H1 (cell line): ENCODE measurements at regions of chr9 and their contacts with region 1.

Region 1: DNA sequence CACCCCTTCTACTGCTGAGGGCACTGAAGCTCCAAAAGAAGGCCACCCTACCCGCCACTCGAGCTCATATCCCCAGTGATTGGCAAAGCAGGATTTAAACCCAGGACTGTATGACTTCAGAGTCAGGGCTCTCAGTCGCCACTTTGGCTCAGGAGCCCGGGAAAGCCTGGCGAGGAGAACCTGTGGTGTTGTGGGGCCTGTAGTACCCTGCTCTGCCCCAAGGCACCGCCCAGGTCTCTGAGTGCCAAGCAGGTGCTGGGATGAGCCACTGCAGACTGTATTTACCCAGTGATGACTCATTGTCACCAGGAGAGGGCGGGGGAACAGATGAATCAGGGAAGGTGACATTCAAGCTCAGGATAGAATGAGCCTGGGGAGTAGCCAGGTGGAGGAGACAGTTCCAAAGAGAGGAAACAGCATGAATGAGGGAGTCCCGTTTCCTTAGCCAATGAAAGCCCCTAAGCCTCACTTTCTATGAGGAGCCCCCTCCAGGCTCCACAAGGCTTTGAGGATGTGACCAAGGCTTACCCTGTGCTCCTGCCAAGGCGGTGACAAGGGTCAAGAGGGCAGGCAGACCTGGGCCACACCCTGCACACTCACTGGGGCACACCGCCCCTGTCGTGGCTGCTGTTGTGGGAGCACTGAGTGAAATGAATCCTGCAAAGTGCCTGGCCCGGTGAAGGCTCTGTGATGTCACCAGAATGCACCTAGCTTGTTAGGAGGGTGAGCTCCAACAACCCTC is 17.8 kb upstream of the DPM2 start:
- DNase-seq: peak in 1 of 2 experiments; percentile 75
- H3K4me3 ChIP-seq: no peak overlapping the region
- H3K27ac ChIP-seq: 0 out of 2 replicates have a peak overlapping the region, but pooled peaks have one; percentile 12
- H3K4me1 ChIP-seq: peaks cover 0 to 11% (median 8%) of the 10 kb centered on the region in 4 experiments; a peak in 5 of 7 replicates
- H3K27me3 ChIP-seq: no peaks in the 10 kb centered on the region
- CTCF ChIP-seq: peak in 2 of 3 experiments; percentile 86 to 92; a peak in 3 of 4 replicates
- EP300 ChIP-seq: no peak
- POLR2A ChIP-seq: no peak
- RAD21 ChIP-seq: peak; percentile 62 to 75

Region 2: GRCh38 chr9:127839109-127839508 is 116.4 kb before region 1 on chr9:
- CTCF ChIA-PET with region 1: no interaction called
- POLR2A ChIA-PET with region 1: no interaction called
- DNase-seq: no peak
- H3K4me3 ChIP-seq: no peak overlapping the region
- H3K27ac ChIP-seq: no peak overlapping the region
- H3K4me1 ChIP-seq: peaks cover 0 to 4% (median 0%) of the 10 kb centered on the region in 4 experiments; a peak in 2 of 7 replicates
- H3K27me3 ChIP-seq: no peaks in the 10 kb centered on the region; a peak in 1 of 7 replicates
- CTCF ChIP-seq: no peak
- EP300 ChIP-seq: no peak
- POLR2A ChIP-seq: no peak
- RAD21 ChIP-seq: no peak

Region 3: GRCh38 chr9:127937388-127938280 is 17.8 kb before region 1 on chr9 and contains the start of gene DPM2:
- CTCF ChIA-PET with region 1: interaction called, 143 read pairs
- POLR2A ChIA-PET with region 1: interaction called, 4 read pairs
- DNase-seq: peak in 1 of 2 experiments; percentile 83
- H3K4me3 ChIP-seq: peak within 1 kb of the TSS; percentile 76 to 98 (median 88)
- H3K27ac ChIP-seq: peak within 1 kb of the TSS; percentile 46; the same call in 1 of the 2 replicates
- H3K4me1 ChIP-seq: peaks cover 0 to 19% (median 14%) of the 10 kb centered on the region in 4 experiments; a peak in 6 of 7 replicates
- H3K27me3 ChIP-seq: no peaks in the 10 kb centered on the region
- CTCF ChIP-seq: no peak
- EP300 ChIP-seq: no peak
- POLR2A ChIP-seq: peak in 1 of 2 experiments; percentile 84; a peak in 2 of 3 replicates
- RAD21 ChIP-seq: no peak
- total RNA-seq, gene DPM2: 45.4 and 48.8 TPM in 2 replicates

Region 4: DNA sequence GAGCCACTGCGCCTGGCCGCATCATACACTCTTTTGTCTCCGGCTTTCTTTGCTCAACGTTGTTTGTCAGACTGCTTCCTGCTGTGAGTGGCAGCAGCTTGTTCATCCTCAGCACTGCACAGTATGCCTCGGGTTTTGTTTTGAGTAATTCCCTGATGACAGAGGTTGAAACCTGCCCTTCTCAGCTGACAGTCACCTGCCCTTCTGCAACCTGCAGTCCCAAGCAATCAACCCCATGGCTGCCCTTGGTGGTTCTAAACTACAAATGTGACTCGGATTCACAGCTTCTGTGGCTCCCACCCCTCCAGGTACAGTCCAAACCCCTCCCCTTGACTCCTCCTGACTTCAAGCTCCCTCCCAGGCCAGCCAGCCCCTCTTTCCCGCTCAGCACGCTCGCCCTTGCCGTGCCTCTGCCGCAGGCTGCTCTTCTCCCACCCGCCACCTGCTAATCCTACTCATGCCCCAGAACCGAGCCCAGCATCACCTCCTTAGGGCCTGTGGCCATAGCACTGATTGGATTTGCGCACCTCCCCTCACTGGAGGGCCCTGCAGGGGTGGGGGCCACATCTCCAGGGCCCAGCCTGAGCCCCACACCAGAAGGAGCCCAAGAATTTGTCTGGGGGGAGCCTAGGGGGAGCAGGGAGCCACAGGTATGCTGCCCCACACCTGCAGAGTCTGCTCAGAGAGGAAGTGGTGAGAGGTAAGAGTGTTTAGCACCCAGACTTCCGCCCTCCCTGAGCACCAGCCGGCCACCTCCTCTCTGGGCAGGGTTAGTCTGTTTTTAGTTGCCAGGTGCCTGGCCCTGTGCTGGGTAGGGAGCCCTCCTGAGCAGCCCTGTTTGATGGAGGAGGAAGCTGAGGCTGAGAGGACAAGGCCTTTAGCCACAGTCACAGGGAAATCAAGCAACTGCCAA is 15.2 kb after region 1 on chr9:
- CTCF ChIA-PET with region 1: interaction called, 41 read pairs
- POLR2A ChIA-PET with region 1: interaction called, 5 read pairs
- DNase-seq: no peak
- H3K4me3 ChIP-seq: no peak overlapping the region
- H3K27ac ChIP-seq: peak overlapping the region; percentile 30; the same call in 1 of the 2 replicates
- H3K4me1 ChIP-seq: peaks cover 0 to 62% (median 39%) of the 10 kb centered on the region in 4 experiments; a peak in 6 of 7 replicates
- H3K27me3 ChIP-seq: no peaks in the 10 kb centered on the region
- CTCF ChIP-seq: no peak
- EP300 ChIP-seq: no peak
- POLR2A ChIP-seq: no peak
- RAD21 ChIP-seq: no peak

Region 5: DNA sequence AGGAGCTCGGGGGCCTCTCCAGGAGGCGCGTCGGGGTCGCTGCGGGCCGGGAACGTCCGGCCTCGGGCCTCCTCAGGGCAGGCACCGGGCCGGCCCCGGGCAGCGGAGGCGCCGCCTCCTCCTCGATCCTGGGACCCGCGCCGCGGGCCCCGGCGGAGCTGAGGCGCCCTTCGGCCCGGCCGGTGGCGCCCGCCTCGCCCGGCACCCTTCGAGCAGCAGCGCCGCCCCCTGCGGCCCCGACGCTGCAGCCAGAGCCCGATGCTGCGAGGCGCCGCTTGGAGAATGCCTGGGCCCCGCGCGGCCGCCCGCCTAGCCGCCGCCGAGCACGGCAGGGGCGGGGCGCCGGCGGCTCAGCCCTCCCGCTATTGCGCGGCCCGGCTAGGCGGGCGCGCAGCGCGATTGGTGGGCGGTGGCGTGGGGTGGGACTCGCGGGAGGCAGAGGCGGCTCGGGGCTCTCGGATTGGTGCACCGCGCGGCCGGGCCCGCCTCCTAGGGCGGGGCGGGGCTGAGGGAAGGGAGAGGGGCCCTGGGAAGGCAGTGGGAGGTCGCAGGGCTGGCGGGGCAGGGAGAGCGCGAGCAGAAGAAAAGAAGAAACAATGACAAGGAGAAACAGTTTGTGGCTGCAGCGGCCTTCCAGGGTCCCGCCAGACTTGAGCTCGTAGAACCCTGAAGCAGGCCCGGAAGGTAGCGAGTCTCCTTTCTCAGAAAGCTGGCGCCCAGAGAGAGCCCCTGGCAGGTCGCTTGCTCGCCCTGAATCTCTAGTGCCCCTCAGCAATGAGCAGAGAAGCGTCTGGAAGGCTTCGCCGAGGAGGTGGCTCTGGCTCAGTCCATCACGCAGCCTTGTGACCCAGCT is 25.5 kb after region 1 on chr9 and contains the start of gene EEIG1:
- CTCF ChIA-PET with region 1: interaction called, 41 read pairs
- POLR2A ChIA-PET with region 1: interaction called, 16 read pairs
- DNase-seq: peak; percentile 80 to 97
- H3K4me3 ChIP-seq: peak within 1 kb of the TSS; percentile 88 to 99 (median 93)
- H3K27ac ChIP-seq: peak within 1 kb of the TSS; percentile 79
- H3K4me1 ChIP-seq: peaks cover 4 to 34% (median 24%) of the 10 kb centered on the region in 4 experiments
- H3K27me3 ChIP-seq: no peaks in the 10 kb centered on the region
- CTCF ChIP-seq: no peak; a peak in 1 of 4 replicates
- EP300 ChIP-seq: no peak
- POLR2A ChIP-seq: no peak; a peak in 2 of 3 replicates
- RAD21 ChIP-seq: no peak
- total RNA-seq, gene EEIG1: 50.8 and 51.3 TPM in 2 replicates

Region 6: GRCh38 chr9:128067876-128068613 is 112.6 kb after region 1 on chr9 and contains the start of gene SLC25A25:
- CTCF ChIA-PET with region 1: interaction called, 13 read pairs
- POLR2A ChIA-PET with region 1: no interaction called
- DNase-seq: peak; percentile 98 to 100
- H3K4me3 ChIP-seq: peak within 1 kb of the TSS; percentile 75 to 84 (median 82)
- H3K27ac ChIP-seq: peak within 1 kb of the TSS; percentile 92
- H3K4me1 ChIP-seq: peaks cover 10 to 16% (median 12%) of the 10 kb centered on the region in 4 experiments
- H3K27me3 ChIP-seq: no peaks in the 10 kb centered on the region; a peak in 1 of 7 replicates
- CTCF ChIP-seq: no peak
- EP300 ChIP-seq: no peak
- POLR2A ChIP-seq: no peak
- RAD21 ChIP-seq: no peak
- total RNA-seq, gene SLC25A25: 16.8 and 18.5 TPM in 2 replicates

Region 7: DNA sequence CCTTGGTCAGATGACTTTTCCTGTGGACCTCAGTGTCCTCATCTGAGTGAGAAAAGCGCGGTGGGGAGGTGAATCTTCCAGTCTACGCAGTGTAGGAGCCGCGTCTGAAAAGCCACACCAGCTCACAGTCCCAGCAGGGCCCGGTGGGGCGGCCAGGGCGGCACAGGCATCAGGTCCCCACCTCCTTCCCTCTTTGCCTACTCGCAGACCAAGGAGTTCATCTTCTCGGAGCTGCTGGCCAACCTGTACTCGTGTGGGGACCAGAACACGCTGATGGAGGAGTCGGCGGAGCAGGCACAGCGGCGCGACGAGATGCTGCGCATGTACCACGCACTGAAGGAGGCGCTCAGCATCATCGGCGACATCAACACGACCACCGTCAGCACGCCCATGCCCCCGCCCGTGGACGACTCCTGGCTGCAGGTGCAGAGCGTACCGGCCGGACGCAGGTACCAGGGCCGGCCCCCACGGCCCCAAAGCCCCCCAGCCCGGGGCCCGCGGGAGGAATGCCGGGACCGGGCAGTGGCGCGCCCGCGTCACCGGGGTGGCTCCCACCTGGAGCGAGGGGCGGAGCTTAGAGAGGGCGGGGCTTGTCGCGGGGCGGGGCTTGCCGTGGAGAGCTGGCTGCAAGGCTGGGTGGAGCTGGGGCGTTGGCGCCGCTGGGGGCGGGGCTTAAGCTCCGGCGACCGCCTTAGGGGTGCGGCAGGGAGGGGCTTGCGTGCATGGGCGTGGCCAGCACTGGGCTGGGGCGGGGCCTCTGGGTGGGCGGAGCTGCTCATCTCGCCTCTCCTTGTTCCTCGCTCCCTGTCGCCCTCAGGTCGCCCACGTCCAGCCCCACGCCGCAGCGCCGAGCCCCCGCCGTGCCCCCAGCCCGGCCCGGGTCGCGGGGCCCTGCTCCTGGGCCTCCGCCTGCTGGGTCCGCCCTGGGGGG is 294.7 kb after region 1 on chr9:
- CTCF ChIA-PET with region 1: no interaction called
- POLR2A ChIA-PET with region 1: no interaction called
- DNase-seq: peak; percentile 93 to 100
- H3K4me3 ChIP-seq: peak overlapping the region; percentile 59 to 83 (median 63)
- H3K27ac ChIP-seq: no peak overlapping the region
- H3K4me1 ChIP-seq: peaks cover 7 to 10% (median 9%) of the 10 kb centered on the region in 4 experiments
- H3K27me3 ChIP-seq: no peaks in the 10 kb centered on the region; a peak in 1 of 7 replicates
- CTCF ChIP-seq: no peak
- EP300 ChIP-seq: peak in 1 of 2 experiments; percentile 29; a peak in 1 of 3 replicates
- POLR2A ChIP-seq: peak in 1 of 2 experiments; percentile 60; a peak in 2 of 3 replicates
- RAD21 ChIP-seq: no peak